Activated CD4-positive, alpha-beta memory T cell treated with anti-CD3 and anti-CD28 coated beads, Interleukin-2, amount 10 ng/mL, durations not matched to agents 7 days and 5 days (primary cell): ENCODE measurements at regions of chr1 and their contacts with region 1.

Region 1: GRCh38 chr1:38026592-38027200 is 14.2 kb downstream of the UTP11 start:
- DNase-seq: peak; percentile 54
- H3K4me3 Mint-ChIP-seq: no peak overlapping the region
- H3K27ac Mint-ChIP-seq: no peak overlapping the region
- H3K4me1 Mint-ChIP-seq: peaks cover 55% of the 10 kb centered on the region
- H3K27me3 Mint-ChIP-seq: no peaks in the 10 kb centered on the region

Region 2: GRCh38 chr1:38071312-38072256 is 44.9 kb after region 1 on chr1:
- CTCF ChIA-PET with region 1: interaction called, 13 read pairs
- POLR2A ChIA-PET with region 1: no interaction called
- DNase-seq: no peak
- H3K4me3 Mint-ChIP-seq: no peak overlapping the region
- H3K27ac Mint-ChIP-seq: no peak overlapping the region
- H3K4me1 Mint-ChIP-seq: no peaks in the 10 kb centered on the region
- H3K27me3 Mint-ChIP-seq: peaks cover 25% of the 10 kb centered on the region

Region 3: GRCh38 chr1:38097284-38097898 is 70.7 kb after region 1 on chr1:
- CTCF ChIA-PET with region 1: no interaction called
- POLR2A ChIA-PET with region 1: no interaction called
- DNase-seq: no peak
- H3K4me3 Mint-ChIP-seq: no peak overlapping the region
- H3K27ac Mint-ChIP-seq: no peak overlapping the region
- H3K4me1 Mint-ChIP-seq: no peaks in the 10 kb centered on the region
- H3K27me3 Mint-ChIP-seq: peaks cover 21% of the 10 kb centered on the region